Thyroid gland (tissue), 4 donors: ENCODE measurements at regions of chr13 and their contacts with region 1.

Region 1: DNA sequence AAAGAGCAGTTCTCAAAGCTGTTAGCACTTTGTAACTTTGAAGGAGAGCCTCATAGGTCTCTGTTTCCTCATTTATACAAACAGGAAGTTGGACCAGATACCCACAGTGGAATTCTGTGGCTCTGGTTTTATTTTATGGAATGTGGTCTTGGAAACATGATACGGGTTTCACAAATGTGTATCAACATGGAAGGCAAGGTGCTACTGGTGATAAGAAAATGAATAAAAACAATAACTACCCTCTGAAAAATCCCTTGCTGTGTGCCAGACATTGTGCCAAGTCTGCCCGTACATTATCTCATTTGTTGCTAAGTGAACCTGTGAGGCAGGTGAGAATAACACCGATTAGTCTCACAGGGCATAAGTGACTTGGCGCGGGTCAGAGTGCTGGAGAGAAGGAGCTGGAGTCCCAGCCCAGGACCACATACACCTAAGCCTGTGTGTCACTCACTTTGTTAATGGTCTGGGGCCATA is 45.0 kb upstream of the RNF113B start:
- DNase-seq: no peak
- H3K4me3 ChIP-seq: no peak overlapping the region
- H3K27ac ChIP-seq: peak overlapping the region; percentile 80 to 95 (median 84)
- H3K4me1 ChIP-seq: peaks cover 57 to 77% of the 10 kb centered on the region in 2 donors
- H3K27me3 ChIP-seq: no peaks in the 10 kb centered on the region
- CTCF ChIP-seq: no peak
- POLR2A ChIP-seq: no peak

Region 2: GRCh38 chr13:98155475-98156109 is 66.5 kb before region 1 on chr13:
- intact Hi-C with region 1: loop called (anchors 10 kb)
- DNase-seq: peak; percentile 44 to 50
- H3K4me3 ChIP-seq: no peak overlapping the region
- H3K27ac ChIP-seq: no peak overlapping the region
- H3K4me1 ChIP-seq: peaks cover 7 to 22% of the 10 kb centered on the region in 2 donors
- H3K27me3 ChIP-seq: no peaks in the 10 kb centered on the region
- CTCF ChIP-seq: no peak
- POLR2A ChIP-seq: no peak

Region 3: DNA sequence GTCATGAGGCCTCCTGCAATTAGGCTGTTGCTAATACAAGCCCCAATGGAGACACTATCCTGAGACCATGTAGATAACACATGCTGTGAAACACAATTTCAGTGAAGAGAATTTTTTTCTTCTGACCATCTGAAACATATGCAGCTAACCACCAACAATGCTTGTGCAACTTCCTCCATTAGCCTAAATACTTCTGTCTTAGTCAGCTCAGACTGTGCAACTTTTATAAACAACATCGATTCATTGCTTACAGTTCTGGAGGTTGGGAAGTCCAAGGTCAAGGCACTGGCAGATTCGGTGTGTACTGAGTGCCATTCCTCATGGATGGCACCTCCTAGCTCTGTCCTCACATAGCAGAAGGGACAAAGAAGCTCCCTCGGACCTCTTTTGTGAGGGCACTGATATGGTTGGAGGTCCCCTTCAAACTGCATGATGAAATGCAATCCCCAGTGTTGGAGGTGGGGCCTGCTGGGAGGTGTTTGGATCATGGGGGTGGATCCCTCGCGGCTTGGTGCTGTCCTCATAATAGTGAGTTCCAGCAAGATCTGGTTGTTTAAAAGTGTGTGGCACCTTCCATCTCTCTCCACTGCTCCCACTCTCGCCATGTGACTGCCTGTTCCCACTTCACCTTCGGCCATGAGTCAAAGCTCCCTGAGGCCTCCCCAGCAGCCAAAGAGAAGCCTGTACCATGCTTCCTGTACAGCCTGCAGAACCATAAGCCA is 327.0 kb after region 1 on chr13:
- intact Hi-C with region 1: no loop called
- DNase-seq: no peak
- H3K4me3 ChIP-seq: no peak overlapping the region
- H3K27ac ChIP-seq: no peak overlapping the region
- H3K4me1 ChIP-seq: peaks cover 25 to 45% of the 10 kb centered on the region in 2 donors
- H3K27me3 ChIP-seq: no peaks in the 10 kb centered on the region
- CTCF ChIP-seq: no peak
- POLR2A ChIP-seq: no peak